ENCODE measurements at regions of chr11 and their contacts with region 1.

Region 1: GRCh38 chr11:13772223-13773046 is 104.0 kb downstream of the FAR1 start:
- DNase-seq: peak in 4 of 9 experiments; percentile 21 to 84 (median 60)
- ATAC-seq: peak; percentile 66
- H3K4me3 ChIP-seq: no peak overlapping the region
- H3K4me3 Mint-ChIP-seq: no peak overlapping the region
- H3K27ac ChIP-seq: no peak overlapping the region
- H3K27ac Mint-ChIP-seq: no peak overlapping the region
- H3K4me1 ChIP-seq: no peaks in the 10 kb centered on the region
- H3K4me1 Mint-ChIP-seq: peaks cover 3% of the 10 kb centered on the region
- H3K27me3 ChIP-seq: no peaks in the 10 kb centered on the region
- H3K27me3 Mint-ChIP-seq: peaks cover 6% of the 10 kb centered on the region
- CTCF ChIP-seq: peak; percentile 75

Region 2: DNA sequence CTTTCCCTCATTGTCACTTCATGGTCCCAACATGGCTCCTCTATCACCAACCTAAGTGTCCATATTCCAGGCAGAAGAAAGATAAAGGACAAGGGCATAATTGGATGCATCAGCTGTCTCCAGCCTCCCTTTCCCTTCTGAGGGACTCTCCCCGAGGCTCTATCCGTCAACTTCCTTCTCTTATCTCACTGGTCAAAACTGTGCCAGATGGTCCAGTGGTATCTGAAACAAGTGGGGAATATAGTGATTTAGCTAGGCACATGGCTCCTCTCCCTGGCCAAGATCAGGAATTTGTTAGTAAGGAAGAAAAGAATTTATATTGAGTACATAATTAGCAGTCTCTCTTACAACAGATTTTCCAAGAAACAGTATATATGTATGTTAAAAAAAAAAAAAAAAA is 177.4 kb after region 1 on chr11:
- CTCF ChIA-PET with region 1: interaction called, 17 read pairs
- POLR2A ChIA-PET with region 1: interaction called, 3 read pairs
- intact Hi-C with region 1: loop called in 1 of 2 experiments (anchors 1 kb)
- DNase-seq: no peak
- ATAC-seq: no peak
- H3K4me3 ChIP-seq: no peak overlapping the region
- H3K4me3 Mint-ChIP-seq: no peak overlapping the region
- H3K27ac ChIP-seq: no peak overlapping the region
- H3K27ac Mint-ChIP-seq: no peak overlapping the region
- H3K4me1 ChIP-seq: no peaks in the 10 kb centered on the region
- H3K4me1 Mint-ChIP-seq: peaks cover 11% of the 10 kb centered on the region
- H3K27me3 ChIP-seq: no peaks in the 10 kb centered on the region
- H3K27me3 Mint-ChIP-seq: no peaks in the 10 kb centered on the region
- CTCF ChIP-seq: no peak

Region 3: DNA sequence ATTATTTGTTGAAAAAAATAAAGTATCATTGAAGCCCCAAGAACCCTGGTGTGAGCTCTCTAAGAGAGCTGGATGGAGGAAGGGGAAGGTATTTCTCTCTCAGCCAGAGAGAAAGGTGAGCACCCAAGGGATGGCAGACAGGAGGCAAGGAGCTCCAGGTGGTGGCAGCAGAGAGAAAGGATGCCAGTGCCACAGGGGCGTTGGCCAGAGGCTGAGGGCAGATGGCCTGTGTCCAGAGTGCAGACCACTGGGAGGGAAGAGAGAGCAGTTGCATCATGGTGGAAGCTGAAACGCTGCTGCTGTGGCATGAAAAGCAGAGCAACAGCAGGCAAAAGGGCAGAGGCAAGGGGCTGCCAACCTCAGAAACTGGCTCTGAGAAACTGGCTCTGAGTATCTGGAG is 198.6 kb after region 1 on chr11:
- CTCF ChIA-PET with region 1: interaction called, 13 read pairs
- POLR2A ChIA-PET with region 1: no interaction called
- intact Hi-C with region 1: no loop called
- DNase-seq: peak in 2 of 9 experiments; percentile 27 to 33
- ATAC-seq: no peak
- H3K4me3 ChIP-seq: no peak overlapping the region
- H3K4me3 Mint-ChIP-seq: no peak overlapping the region
- H3K27ac ChIP-seq: no peak overlapping the region
- H3K27ac Mint-ChIP-seq: no peak overlapping the region
- H3K4me1 ChIP-seq: no peaks in the 10 kb centered on the region
- H3K4me1 Mint-ChIP-seq: no peaks in the 10 kb centered on the region
- H3K27me3 ChIP-seq: peaks cover 0 to 1% of the 10 kb centered on the region in 2 experiments
- H3K27me3 Mint-ChIP-seq: peaks cover 16% of the 10 kb centered on the region
- CTCF ChIP-seq: no peak

Region 4: DNA sequence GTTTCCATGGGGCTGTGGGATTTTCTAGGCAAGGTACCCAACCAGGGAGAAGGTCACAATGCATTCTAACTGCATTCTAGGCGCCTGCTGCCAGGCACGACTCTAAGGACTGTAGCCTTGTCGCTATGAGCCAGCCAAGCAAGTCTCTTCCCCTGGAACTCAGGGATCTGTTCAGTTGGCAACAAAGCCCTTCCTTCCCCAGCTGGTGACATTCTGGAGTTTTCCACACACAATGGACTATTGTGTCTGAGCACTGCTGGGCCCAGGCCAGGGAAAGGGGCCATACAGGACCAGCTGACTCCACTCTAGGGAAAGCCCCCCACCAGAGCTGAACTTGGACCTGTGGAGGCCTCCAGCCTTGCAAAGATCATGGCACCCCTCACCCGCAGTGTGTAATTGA is 469.8 kb after region 1 on chr11:
- CTCF ChIA-PET with region 1: interaction called, 56 read pairs
- POLR2A ChIA-PET with region 1: no interaction called
- intact Hi-C with region 1: no loop called
- DNase-seq: no peak
- ATAC-seq: no peak
- H3K4me3 ChIP-seq: no peak overlapping the region
- H3K4me3 Mint-ChIP-seq: no peak overlapping the region
- H3K27ac ChIP-seq: no peak overlapping the region
- H3K27ac Mint-ChIP-seq: no peak overlapping the region
- H3K4me1 ChIP-seq: no peaks in the 10 kb centered on the region
- H3K4me1 Mint-ChIP-seq: peaks cover 1% of the 10 kb centered on the region
- H3K27me3 ChIP-seq: no peaks in the 10 kb centered on the region
- H3K27me3 Mint-ChIP-seq: no peaks in the 10 kb centered on the region
- CTCF ChIP-seq: no peak

Region 5: GRCh38 chr11:14308114-14308896 is 535.9 kb after region 1 on chr11:
- CTCF ChIA-PET with region 1: interaction called, 12 read pairs
- POLR2A ChIA-PET with region 1: no interaction called
- intact Hi-C with region 1: no loop called
- DNase-seq: peak in 2 of 9 experiments; percentile 53 to 67
- ATAC-seq: peak; percentile 84
- H3K4me3 ChIP-seq: no peak overlapping the region
- H3K4me3 Mint-ChIP-seq: no peak overlapping the region
- H3K27ac ChIP-seq: peak overlapping the region in 1 of 2 experiments; percentile 23
- H3K27ac Mint-ChIP-seq: no peak overlapping the region
- H3K4me1 ChIP-seq: peaks cover 6% of the 10 kb centered on the region
- H3K4me1 Mint-ChIP-seq: peaks cover 31% of the 10 kb centered on the region
- H3K27me3 ChIP-seq: no peaks in the 10 kb centered on the region
- H3K27me3 Mint-ChIP-seq: no peaks in the 10 kb centered on the region
- CTCF ChIP-seq: peak; percentile 59

Measured in CD8-positive, alpha-beta T cell (primary cell).